Activated B cell treated with CpG ODN at 0.5 μM for 24 hours (primary cell): ENCODE measurements at regions of chr13 and their contacts with region 1.

Region 1: GRCh38 chr13:91375116-91375729 is 23.2 kb upstream of the GPC5 start:
- DNase-seq: no peak
- ATAC-seq: peak; percentile 83
- H3K4me3 Mint-ChIP-seq: no peak overlapping the region
- H3K27ac Mint-ChIP-seq: no peak overlapping the region
- H3K4me1 Mint-ChIP-seq: peaks cover 5% of the 10 kb centered on the region
- H3K27me3 Mint-ChIP-seq: no peaks in the 10 kb centered on the region
- CTCF ChIP-seq: peak; percentile 41

Region 2: DNA sequence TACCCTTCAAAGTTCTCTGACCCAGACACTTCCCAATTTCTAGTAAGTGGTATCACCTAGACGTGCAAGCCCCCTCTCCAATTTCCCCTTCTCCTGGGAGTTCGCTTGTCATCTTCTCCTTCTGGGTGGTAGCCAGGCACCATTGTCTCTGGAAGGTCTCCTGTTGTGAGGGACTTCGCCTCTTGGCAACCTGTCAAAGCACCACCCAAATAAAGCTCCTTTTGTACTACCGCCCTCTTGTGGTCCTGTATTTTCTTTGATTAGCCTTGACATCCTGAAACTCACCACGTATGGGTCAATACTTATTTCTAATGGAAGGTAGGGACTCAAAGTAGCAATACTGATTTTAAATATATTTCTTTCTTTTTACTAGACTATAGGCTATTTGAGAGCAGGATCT is 31.4 kb after region 1 on chr13:
- CTCF ChIA-PET with region 1: interaction called, 11 read pairs
- POLR2A ChIA-PET with region 1: no interaction called
- intact Hi-C with region 1: loop called (anchors 1 kb)
- DNase-seq: no peak
- ATAC-seq: peak; percentile 50
- H3K4me3 Mint-ChIP-seq: no peak overlapping the region
- H3K27ac Mint-ChIP-seq: no peak overlapping the region
- H3K4me1 Mint-ChIP-seq: peaks cover 3% of the 10 kb centered on the region
- H3K27me3 Mint-ChIP-seq: peaks cover 14% of the 10 kb centered on the region
- CTCF ChIP-seq: no peak

Region 3: GRCh38 chr13:91450913-91451312 is 75.7 kb after region 1 on chr13:
- CTCF ChIA-PET with region 1: no interaction called
- POLR2A ChIA-PET with region 1: no interaction called
- intact Hi-C with region 1: loop called (anchors 5 kb)
- DNase-seq: no peak
- ATAC-seq: no peak
- H3K4me3 Mint-ChIP-seq: no peak overlapping the region
- H3K27ac Mint-ChIP-seq: no peak overlapping the region
- H3K4me1 Mint-ChIP-seq: no peaks in the 10 kb centered on the region
- H3K27me3 Mint-ChIP-seq: no peaks in the 10 kb centered on the region
- CTCF ChIP-seq: no peak

Region 4: GRCh38 chr13:91459485-91459884 is 84.3 kb after region 1 on chr13:
- CTCF ChIA-PET with region 1: no interaction called
- POLR2A ChIA-PET with region 1: no interaction called
- intact Hi-C with region 1: loop called (anchors 1 kb)
- DNase-seq: no peak
- ATAC-seq: no peak
- H3K4me3 Mint-ChIP-seq: no peak overlapping the region
- H3K27ac Mint-ChIP-seq: no peak overlapping the region
- H3K4me1 Mint-ChIP-seq: no peaks in the 10 kb centered on the region
- H3K27me3 Mint-ChIP-seq: peaks cover 2% of the 10 kb centered on the region
- CTCF ChIP-seq: no peak

Region 5: DNA sequence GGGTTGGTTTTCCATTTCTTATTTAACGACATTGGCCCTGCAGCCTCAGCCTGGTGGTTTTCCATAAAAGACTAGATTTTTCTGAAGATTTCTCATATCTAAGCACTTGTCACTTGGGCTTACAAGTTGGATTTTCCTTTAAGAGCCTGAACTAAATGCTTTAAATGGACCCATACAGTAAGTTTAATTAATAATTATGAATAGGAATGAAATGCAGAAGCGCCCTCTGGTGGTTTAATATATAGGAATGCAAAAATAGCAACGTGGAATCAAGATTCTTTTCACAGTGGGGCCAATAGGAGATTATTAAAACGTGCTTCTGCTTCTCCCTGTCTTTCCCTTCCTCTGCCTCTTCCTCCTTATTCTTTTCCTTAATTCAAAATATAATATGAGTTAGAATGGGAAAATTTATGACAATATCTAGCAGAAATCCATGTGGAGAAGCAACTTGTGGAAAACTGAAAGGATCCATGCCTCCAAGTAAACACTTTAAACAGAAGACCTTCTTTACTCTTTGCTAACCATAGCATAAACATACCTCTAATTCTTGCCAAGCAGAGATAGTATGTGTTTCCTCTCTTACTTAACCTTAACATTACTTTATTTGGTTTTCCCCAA is 347.2 kb after region 1 on chr13:
- CTCF ChIA-PET with region 1: no interaction called
- POLR2A ChIA-PET with region 1: no interaction called
- intact Hi-C with region 1: loop called (anchors 1 kb)
- DNase-seq: no peak
- ATAC-seq: no peak
- H3K4me3 Mint-ChIP-seq: no peak overlapping the region
- H3K27ac Mint-ChIP-seq: no peak overlapping the region
- H3K4me1 Mint-ChIP-seq: no peaks in the 10 kb centered on the region
- H3K27me3 Mint-ChIP-seq: no peaks in the 10 kb centered on the region
- CTCF ChIP-seq: peak; percentile 37